Activated naive CD8-positive, alpha-beta T cell treated with anti-CD3 and anti-CD28 coated beads, Interleukin-2, amount 10 ng/mL, durations not matched to agents 7 days and 5 days (primary cell): ENCODE measurements at regions of chr19 and their contacts with region 1.

Region 1: GRCh38 chr19:8487137-8487851 is 15.1 kb downstream of the PRAM1 start:
- DNase-seq: peak; percentile 68
- ATAC-seq: peak; percentile 83
- H3K4me3 Mint-ChIP-seq: peak overlapping the region; percentile 68
- H3K27ac Mint-ChIP-seq: peak overlapping the region; percentile 86
- H3K4me1 Mint-ChIP-seq: peaks cover 28% of the 10 kb centered on the region
- H3K27me3 Mint-ChIP-seq: no peaks in the 10 kb centered on the region

Region 2: GRCh38 chr19:8473648-8474476 is 13.4 kb before region 1 on chr19:
- POLR2A ChIA-PET with region 1: no interaction called
- DNase-seq: no peak
- ATAC-seq: no peak
- H3K4me3 Mint-ChIP-seq: peak overlapping the region; percentile 9
- H3K27ac Mint-ChIP-seq: peak overlapping the region; percentile 81
- H3K4me1 Mint-ChIP-seq: peaks cover 48% of the 10 kb centered on the region
- H3K27me3 Mint-ChIP-seq: no peaks in the 10 kb centered on the region

Region 3: DNA sequence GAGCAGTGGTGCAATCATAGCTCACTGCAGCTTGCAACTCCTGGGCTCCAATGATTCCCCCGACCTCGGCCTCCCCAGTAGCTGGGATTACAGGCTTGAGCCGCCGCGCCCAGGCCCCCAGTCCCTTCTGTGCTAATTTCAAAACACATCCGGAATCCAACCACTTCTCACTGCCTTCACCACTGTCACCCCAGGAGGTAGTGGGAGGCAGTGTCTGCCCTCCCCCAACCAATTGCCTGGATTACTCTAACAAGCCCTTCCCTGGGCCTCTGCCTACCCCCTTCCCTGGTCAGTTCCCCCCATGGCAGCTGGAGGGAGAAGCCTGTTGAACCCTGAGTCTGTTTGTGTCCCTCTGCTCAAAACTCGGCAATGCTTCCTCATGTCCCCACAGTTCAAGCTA is 12.9 kb after region 1 on chr19:
- POLR2A ChIA-PET with region 1: interaction called, 14 read pairs
- DNase-seq: no peak
- ATAC-seq: peak; percentile 15
- H3K4me3 Mint-ChIP-seq: no peak overlapping the region
- H3K27ac Mint-ChIP-seq: peak overlapping the region; percentile 67
- H3K4me1 Mint-ChIP-seq: peaks cover 19% of the 10 kb centered on the region
- H3K27me3 Mint-ChIP-seq: peaks cover 2% of the 10 kb centered on the region

Region 4: DNA sequence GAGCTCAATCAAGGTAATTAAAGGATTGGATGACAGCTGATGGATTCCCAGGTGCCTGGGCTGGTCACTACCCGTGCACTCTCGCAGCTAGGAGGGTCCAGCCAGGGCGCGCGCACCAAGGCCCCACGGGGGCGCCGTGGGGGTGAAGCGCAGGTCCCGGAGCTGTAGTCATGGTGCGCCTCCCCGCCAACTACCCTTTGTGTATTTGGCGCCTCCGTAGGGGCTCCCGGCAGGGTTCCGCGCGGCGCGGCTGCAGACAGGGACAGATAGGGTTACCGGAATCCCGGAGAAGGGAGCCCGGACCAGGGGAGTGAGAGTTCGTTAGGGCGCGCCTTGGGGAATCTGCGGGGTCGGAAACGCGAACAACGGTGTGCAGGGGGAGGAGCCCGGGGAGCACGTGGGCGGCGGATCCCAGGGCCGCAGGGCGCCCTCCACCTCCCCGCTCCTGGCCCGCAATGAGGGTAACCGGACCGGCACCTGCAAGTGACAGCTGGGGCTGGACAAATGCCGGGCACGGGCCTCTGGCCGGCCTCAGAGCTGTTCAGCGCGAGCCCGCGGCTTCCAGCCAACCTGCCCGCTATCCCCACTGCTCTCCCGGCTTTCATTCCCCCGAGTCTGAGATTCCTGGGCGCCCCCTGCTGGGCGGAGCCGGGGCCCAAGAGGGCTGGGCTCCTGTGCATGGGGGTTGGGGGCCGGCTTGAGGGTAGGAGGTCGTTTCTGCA is 18.5 kb after region 1 on chr19:
- POLR2A ChIA-PET with region 1: interaction called, 14 read pairs
- DNase-seq: peak; percentile 85
- ATAC-seq: peak; percentile 78
- H3K4me3 Mint-ChIP-seq: peak overlapping the region; percentile 95
- H3K27ac Mint-ChIP-seq: peak overlapping the region; percentile 84
- H3K4me1 Mint-ChIP-seq: peaks cover 10% of the 10 kb centered on the region
- H3K27me3 Mint-ChIP-seq: peaks cover 2% of the 10 kb centered on the region